HEK293 (cell line): ENCODE measurements at regions of chr1 and their contacts with region 1.

Region 1: DNA sequence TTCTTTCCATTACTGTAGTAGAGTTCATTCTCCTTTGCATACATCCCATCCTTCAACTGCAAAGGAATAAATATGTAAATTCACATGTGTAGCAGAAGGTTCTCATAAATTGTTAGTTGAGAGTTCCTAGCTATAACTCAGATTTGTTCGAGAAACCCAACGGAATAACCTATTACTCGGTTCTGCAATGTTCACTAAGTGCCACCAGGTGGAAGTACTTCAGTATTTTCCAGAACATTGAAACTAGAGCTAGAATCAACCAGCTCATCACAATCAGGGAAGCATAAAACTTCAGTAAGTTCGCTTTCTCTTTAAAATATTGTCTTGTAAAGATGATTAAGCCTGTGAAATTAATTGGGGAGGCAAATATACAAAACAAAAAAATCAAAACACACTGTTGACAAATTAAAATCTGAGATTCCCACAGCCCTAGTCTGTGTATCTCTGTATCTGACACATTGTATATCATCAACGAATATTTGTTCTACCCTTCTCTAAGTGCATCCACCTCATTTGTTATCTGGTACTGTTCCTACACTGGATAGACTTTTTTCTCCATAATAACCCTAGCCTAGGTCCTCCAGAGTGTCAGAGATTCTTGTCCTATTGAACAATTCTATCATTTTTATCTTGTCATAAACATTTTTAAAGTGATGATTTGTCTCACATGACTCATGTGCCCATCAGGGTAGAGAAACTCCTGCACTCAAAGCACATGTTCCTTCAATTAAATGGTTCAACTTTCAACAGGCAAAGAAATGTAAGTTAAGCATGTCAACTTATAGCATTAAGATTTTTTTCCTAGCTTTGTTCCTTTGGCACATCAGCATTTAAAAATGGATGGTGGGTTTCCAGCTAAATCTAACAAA is 31.9 kb downstream of the MROH9 start:
- H3K4me3 ChIP-seq: no peak overlapping the region
- H3K27ac ChIP-seq: no peak overlapping the region
- H3K4me1 ChIP-seq: no peaks in the 10 kb centered on the region
- CTCF ChIP-seq: no peak

Region 2: GRCh38 chr1:171081314-171081753 is 114.1 kb after region 1 on chr1:
- CTCF ChIA-PET with region 1: interaction called, 11 read pairs
- POLR2A ChIA-PET with region 1: no interaction called
- H3K4me3 ChIP-seq: no peak overlapping the region
- H3K27ac ChIP-seq: no peak overlapping the region
- H3K4me1 ChIP-seq: no peaks in the 10 kb centered on the region
- CTCF ChIP-seq: no peak